Vagina (tissue), 2 donors: ENCODE measurements at regions of chr21 and their contacts with region 1.

Region 1: GRCh38 chr21:16124378-16125130 is 394.8 kb downstream of the USP25 start:
- DNase-seq: no peak
- H3K4me3 ChIP-seq: peak overlapping the region; percentile 7 to 20
- H3K27ac ChIP-seq: peak overlapping the region; percentile 57
- H3K4me1 ChIP-seq: peaks cover 13% of the 10 kb centered on the region
- H3K27me3 ChIP-seq: no peaks in the 10 kb centered on the region
- CTCF ChIP-seq: no peak
- POLR2A ChIP-seq: no peak

Region 2: GRCh38 chr21:16186742-16187141 is 62.2 kb after region 1 on chr21:
- intact Hi-C with region 1: loop called (anchors 10 kb)
- DNase-seq: no peak
- H3K4me3 ChIP-seq: no peak overlapping the region
- H3K27ac ChIP-seq: peak overlapping the region; percentile 28
- H3K4me1 ChIP-seq: peaks cover 10% of the 10 kb centered on the region
- H3K27me3 ChIP-seq: no peaks in the 10 kb centered on the region
- CTCF ChIP-seq: no peak
- POLR2A ChIP-seq: no peak